A673 (cell line): ENCODE measurements at regions of chr19 and their contacts with region 1.

Region 1: DNA sequence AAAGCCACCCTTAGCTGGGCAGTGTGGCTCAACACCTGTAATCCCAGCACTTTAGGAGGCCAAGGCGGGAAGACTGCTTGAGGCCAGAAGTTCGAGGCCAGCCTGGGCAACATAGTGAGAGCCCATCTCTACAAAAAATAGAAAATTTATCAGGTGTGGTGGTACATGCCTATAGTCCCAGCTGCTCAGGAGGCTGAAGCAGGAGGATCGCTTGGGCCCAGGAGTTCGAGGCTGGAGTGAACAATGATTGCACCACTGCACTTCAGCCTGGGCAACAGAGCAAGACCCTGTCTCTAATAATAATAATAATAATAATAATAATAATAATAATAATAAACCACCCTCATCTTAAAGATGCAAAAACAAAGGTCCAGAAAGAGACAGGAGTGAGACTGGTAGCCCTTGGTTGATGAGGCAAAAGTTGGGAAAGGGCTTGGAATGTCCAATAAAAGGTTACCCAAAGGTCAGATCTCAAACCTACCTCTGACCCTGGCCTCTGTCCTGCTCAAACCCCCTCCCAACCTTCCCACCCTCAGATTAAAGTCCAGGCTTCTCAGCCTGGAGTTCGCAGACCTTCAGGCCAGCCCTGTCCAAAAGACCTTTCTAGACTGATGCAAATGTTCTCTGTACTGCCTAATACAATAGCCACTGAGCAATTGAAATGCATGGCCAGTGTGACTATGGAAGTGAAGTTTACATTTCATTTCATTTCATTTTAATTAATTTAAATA is 9.1 kb downstream of the ZNF575 start:
- DNase-seq: no peak
- H3K4me3 ChIP-seq: no peak overlapping the region
- H3K27ac ChIP-seq: no peak overlapping the region
- H3K4me1 ChIP-seq: no peaks in the 10 kb centered on the region
- H3K27me3 ChIP-seq: no peaks in the 10 kb centered on the region
- CTCF ChIP-seq: no peak

Region 2: DNA sequence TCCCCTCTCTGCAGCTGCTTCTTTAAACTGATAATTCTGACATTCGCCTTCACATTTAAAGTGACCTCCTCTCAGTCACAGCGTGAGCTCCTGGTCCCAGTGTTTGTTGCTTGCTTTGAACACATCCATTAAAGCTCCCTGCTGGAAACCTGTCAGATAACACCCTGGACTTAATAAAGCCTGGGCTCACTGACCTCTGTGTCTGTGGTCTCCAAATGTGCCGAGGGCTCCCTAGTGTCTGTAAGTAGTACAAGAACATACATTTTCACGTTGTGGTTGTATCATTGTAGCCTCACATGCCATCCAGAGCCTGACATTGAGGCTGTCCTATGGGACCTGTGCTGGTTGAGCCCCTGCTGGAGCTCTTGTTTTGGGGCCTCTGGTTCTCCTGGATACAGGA is 334.1 kb before region 1 on chr19:
- CTCF ChIA-PET with region 1: no interaction called
- POLR2A ChIA-PET with region 1: no interaction called
- intact Hi-C with region 1: no loop called
- DNase-seq: no peak
- H3K4me3 ChIP-seq: no peak overlapping the region
- H3K27ac ChIP-seq: no peak overlapping the region
- H3K4me1 ChIP-seq: no peaks in the 10 kb centered on the region
- H3K27me3 ChIP-seq: no peaks in the 10 kb centered on the region
- CTCF ChIP-seq: no peak

Region 3: GRCh38 chr19:43526884-43527859 is 14.9 kb before region 1 on chr19 and contains the start of gene ETHE1:
- CTCF ChIA-PET with region 1: interaction called, 16 read pairs
- POLR2A ChIA-PET with region 1: no interaction called
- intact Hi-C with region 1: no loop called
- DNase-seq: peak; percentile 61
- H3K4me3 ChIP-seq: peak within 1 kb of the TSS; percentile 91
- H3K27ac ChIP-seq: peak within 1 kb of the TSS; percentile 52
- H3K4me1 ChIP-seq: peaks cover 8% of the 10 kb centered on the region
- H3K27me3 ChIP-seq: no peaks in the 10 kb centered on the region
- CTCF ChIP-seq: 0 out of 2 replicates have a peak, but pooled peaks have one; percentile 14
- total RNA-seq, gene ETHE1: 8.8 and 15.3 TPM in 2 replicates

Region 4: GRCh38 chr19:43726736-43727592 is 184.9 kb after region 1 on chr19:
- CTCF ChIA-PET with region 1: no interaction called
- POLR2A ChIA-PET with region 1: no interaction called
- intact Hi-C with region 1: no loop called
- DNase-seq: no peak
- H3K4me3 ChIP-seq: no peak overlapping the region
- H3K27ac ChIP-seq: no peak overlapping the region
- H3K4me1 ChIP-seq: no peaks in the 10 kb centered on the region
- H3K27me3 ChIP-seq: no peaks in the 10 kb centered on the region
- CTCF ChIP-seq: no peak